Caco-2 (cell line): ENCODE measurements at regions of chr10 and their contacts with region 1.

Region 1: GRCh38 chr10:79487296-79488194 is 24.8 kb upstream of the EIF5AL1 start:
- DNase-seq: peak; percentile 77
- H3K4me3 ChIP-seq: no peak overlapping the region
- H3K4me3 Mint-ChIP-seq: no peak overlapping the region
- H3K27ac Mint-ChIP-seq: no peak overlapping the region
- H3K4me1 ChIP-seq: no peaks in the 10 kb centered on the region
- H3K4me1 Mint-ChIP-seq: peaks cover 6% of the 10 kb centered on the region
- H3K27me3 ChIP-seq: no peaks in the 10 kb centered on the region; the same call in 1 of the 2 replicates
- H3K27me3 Mint-ChIP-seq: no peaks in the 10 kb centered on the region
- CTCF ChIP-seq: peak; percentile 68 to 85

Region 2: DNA sequence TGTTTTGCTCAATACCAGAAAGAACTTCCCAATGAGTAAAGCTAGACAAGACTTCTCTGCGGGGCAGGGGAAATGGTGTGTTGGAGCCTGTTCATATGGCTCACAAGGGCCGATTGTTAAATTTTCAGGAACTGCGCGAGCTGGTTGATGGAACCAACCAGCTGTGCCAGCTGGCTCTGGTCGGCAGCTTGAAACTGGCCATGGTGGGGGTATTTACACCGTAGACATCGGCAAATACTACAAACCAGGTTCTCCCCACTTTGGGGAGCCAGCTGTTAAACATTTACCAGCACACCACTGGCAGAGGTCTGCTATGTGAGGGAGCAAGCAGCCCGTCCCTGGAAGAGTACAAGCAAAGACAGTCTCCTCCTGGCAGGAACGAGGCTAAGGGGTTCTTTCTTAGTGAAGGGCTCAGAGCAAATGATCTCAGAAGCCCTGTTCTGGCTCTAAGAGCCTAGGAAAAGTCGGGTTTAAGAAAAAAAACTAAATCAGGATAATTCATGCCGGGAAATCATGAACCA is 427.6 kb before region 1 on chr10:
- CTCF ChIA-PET with region 1: no interaction called
- POLR2A ChIA-PET with region 1: no interaction called
- intact Hi-C with region 1: no loop called
- DNase-seq: peak in 1 of 2 experiments; percentile 42
- H3K4me3 ChIP-seq: no peak overlapping the region
- H3K4me3 Mint-ChIP-seq: peak overlapping the region; percentile 49
- H3K27ac Mint-ChIP-seq: peak overlapping the region; percentile 82
- H3K4me1 ChIP-seq: peaks cover 52% of the 10 kb centered on the region
- H3K4me1 Mint-ChIP-seq: peaks cover 45% of the 10 kb centered on the region
- H3K27me3 ChIP-seq: no peaks in the 10 kb centered on the region
- H3K27me3 Mint-ChIP-seq: no peaks in the 10 kb centered on the region
- CTCF ChIP-seq: no peak

Region 3: DNA sequence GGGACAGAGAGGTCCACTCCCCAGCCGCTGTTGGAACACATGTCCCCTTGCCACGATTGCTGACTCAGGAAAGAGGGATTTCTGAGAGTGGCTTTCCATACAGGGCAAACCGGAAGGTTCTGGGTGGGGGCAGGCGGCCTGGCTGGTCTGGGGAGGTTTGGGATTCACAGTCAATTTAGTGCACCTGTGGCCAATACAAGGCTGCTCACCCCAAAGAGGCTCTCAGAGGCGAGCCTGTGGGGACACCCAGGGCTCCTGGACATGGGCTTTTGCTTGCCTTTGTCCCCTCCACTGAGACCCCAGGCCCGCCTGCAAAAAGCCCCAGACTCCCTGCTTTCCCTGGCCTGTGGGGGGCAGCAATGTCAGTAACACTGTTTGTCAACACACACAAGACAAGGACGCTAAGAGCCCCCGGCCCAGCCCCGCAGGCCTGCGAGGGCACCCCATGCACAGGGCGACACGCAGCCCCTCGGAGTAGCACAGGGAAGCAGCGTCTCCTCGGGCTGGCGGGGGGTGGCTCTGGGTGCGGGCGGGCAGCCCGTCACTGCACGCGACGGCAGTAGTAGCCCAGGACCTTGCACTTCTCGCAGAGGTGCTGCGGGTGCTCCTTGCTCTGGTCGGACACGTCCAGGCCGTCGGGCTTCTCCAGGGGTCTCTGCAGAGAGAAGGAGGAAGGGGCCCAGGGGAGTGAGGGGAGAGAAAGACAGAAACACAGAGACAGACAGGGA is 101.6 kb before region 1 on chr10:
- CTCF ChIA-PET with region 1: interaction called, 4 read pairs
- POLR2A ChIA-PET with region 1: no interaction called
- intact Hi-C with region 1: loop called (anchors 5 kb)
- DNase-seq: peak in 1 of 2 experiments; percentile 33
- H3K4me3 ChIP-seq: no peak overlapping the region
- H3K4me3 Mint-ChIP-seq: no peak overlapping the region
- H3K27ac Mint-ChIP-seq: no peak overlapping the region
- H3K4me1 ChIP-seq: no peaks in the 10 kb centered on the region
- H3K4me1 Mint-ChIP-seq: no peaks in the 10 kb centered on the region
- H3K27me3 ChIP-seq: no peaks in the 10 kb centered on the region
- H3K27me3 Mint-ChIP-seq: no peaks in the 10 kb centered on the region
- CTCF ChIP-seq: peak; percentile 21 to 39

Region 4: DNA sequence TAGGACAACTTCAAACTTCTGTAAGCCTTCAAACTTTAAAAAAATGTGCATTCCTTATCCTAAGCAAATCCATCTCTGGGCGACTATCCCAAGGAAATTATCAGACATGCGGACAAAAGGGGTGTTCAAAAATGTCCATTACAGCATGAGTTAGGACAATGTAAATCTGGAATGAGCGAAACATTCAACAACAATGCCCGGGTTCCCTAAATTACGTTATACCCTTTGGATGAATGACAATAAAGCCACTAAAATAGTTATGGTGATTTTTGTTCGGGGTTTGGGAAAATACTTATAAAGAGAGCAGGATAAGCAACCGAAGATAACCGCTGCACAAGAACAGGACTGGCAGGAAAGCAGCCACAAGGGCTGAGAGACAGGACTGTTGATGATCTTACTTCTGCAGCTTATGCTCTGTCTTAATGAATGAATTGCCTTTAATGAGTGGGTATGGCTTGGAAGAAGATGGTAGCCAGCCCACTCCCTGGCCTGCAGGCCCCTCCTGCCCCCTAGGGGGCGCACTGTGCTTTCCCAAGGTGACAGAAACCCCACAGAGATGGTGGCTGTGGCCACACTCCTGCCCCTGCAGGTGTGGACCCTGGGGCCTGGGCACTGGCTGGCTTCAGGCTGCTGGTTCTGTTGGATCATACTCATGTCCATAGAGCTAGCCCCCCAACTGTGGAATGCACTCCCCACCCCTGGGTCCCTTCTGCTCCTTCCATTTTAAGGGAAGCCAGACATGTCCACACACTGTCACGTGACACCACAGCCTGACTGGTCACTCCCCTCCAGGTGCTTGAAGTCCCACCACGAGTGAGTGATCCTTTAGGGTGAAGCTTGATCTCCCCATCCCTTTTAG is 87.2 kb before region 1 on chr10:
- CTCF ChIA-PET with region 1: interaction called, 3 read pairs
- POLR2A ChIA-PET with region 1: no interaction called
- intact Hi-C with region 1: loop called (anchors 2 kb)
- DNase-seq: peak in 1 of 2 experiments; percentile 74
- H3K4me3 ChIP-seq: no peak overlapping the region
- H3K4me3 Mint-ChIP-seq: no peak overlapping the region
- H3K27ac Mint-ChIP-seq: no peak overlapping the region
- H3K4me1 ChIP-seq: no peaks in the 10 kb centered on the region
- H3K4me1 Mint-ChIP-seq: peaks cover 20% of the 10 kb centered on the region
- H3K27me3 ChIP-seq: no peaks in the 10 kb centered on the region
- H3K27me3 Mint-ChIP-seq: no peaks in the 10 kb centered on the region
- CTCF ChIP-seq: peak; percentile 68 to 75